Left colon (tissue), 2 donors: ENCODE measurements at regions of chr11 and their contacts with region 1.

Region 1: DNA sequence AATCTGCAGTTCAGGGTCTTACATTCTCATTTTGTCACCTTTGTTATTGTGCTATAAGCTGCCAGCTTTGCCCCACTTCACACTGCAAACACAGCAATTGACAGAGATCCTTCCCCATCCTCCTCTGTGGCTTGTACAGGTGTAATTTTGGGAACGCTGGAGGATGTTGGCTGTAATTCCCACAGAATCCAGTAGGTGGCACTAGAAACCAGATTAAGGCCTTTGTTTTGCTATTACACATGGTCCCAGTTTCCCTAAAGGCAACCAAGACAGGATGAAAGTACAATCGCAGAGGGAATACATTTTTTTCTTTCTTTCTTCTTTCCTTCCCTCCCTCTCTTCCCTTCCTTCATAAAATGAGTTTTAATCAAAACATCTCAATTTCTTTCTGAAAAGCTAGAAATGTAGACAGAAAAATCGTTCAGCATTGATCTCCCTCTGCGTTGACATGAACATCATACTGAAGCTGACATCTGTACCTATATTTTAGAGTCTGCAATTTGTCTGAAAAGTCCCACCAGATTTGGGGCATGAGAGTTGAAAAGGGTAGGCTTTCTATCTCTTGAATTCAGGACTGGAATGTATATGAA is 21.3 kb upstream of the NELL1 start:
- DNase-seq: peak in 1 of 2 donors; percentile 21
- ATAC-seq: peak; percentile 40

Region 2: DNA sequence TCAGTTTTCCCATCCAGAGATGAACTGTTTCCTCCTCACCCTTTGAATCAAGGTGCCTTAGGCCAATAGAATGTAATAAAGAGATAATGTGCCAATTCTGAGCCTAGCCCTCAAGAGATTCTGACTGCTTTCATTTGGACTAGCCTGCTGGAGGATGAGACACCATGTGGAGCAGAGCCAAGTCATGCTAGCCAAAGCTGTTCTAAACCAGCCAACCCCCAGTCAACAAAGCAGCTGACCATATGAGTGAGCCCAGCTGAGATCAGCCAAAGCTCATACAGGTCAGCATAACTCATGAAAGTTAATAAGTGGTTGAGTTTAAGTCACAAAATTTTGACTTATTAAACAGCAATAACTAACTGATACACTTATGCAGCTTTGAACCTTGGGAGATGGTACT is 421.1 kb before region 1 on chr11:
- intact Hi-C with region 1: no loop called
- DNase-seq: no peak
- ATAC-seq: no peak

Region 3: DNA sequence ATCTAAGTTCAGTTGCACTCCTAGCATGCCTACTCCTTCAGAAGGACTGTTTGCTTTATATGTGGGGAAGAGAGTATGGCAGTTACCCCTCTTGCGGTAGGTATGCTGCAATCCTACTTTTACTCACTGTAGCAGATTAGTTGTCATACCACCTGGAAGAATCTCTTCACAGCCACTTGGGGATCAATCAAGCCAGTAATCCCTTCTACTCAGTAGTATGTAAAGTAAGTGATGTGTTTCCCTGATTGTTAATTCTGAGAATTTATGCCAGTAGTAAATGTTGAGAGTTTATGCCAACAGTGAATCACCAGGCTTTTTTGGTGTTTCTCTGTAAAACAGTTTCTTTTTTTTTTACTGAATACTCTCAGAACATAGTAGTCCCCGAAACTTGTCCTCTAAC is 226.1 kb before region 1 on chr11:
- intact Hi-C with region 1: no loop called
- DNase-seq: no peak
- ATAC-seq: no peak

Region 4: DNA sequence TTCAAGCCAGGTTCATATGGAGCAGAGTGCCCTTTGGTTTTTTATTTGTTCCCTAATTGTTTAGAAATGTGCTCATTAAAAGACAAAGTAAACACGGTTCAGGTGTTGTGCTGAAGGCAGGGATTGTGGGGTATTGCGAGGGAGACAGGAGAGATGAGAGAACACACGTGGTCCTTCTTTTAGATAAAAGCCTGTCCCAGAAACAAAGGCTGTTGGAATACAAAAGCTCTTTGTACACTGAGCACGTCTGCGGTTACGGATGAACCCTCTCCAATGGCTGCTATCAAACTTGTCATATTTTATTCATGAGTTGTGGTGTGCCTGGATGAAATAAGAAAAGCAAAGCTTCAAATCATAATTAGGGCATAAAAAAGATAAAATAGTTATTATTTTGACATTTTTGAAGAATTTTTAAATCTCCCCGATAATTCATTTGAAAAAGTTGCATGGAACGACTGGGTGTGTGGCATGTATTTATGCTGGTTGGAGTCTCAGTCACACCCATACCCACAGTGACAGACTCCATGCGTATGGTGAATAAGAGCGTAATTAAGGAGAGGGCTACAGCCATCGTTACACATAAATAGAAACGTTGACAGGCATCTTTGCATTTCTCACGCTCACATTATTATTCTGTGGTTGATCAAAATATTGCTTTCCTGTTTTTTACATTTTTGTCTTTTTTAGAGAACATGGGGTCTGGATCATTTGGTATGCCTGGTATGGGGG is 114.2 kb after region 1 on chr11:
- intact Hi-C with region 1: no loop called
- DNase-seq: no peak
- ATAC-seq: no peak

Region 5: GRCh38 chr11:22276535-22276934 is 1628.5 kb after region 1 on chr11:
- intact Hi-C with region 1: loop called in 1 of 2 experiments (anchors 10 kb)
- DNase-seq: no peak
- ATAC-seq: peak; percentile 90